GM10248 (cell line): ENCODE measurements at regions of chr20 and their contacts with region 1.

Region 1: GRCh38 chr20:2523919-2524708 is 12.3 kb upstream of the TMC2 start:
- DNase-seq: peak; percentile 89
- CTCF ChIP-seq: peak; percentile 96

Region 2: DNA sequence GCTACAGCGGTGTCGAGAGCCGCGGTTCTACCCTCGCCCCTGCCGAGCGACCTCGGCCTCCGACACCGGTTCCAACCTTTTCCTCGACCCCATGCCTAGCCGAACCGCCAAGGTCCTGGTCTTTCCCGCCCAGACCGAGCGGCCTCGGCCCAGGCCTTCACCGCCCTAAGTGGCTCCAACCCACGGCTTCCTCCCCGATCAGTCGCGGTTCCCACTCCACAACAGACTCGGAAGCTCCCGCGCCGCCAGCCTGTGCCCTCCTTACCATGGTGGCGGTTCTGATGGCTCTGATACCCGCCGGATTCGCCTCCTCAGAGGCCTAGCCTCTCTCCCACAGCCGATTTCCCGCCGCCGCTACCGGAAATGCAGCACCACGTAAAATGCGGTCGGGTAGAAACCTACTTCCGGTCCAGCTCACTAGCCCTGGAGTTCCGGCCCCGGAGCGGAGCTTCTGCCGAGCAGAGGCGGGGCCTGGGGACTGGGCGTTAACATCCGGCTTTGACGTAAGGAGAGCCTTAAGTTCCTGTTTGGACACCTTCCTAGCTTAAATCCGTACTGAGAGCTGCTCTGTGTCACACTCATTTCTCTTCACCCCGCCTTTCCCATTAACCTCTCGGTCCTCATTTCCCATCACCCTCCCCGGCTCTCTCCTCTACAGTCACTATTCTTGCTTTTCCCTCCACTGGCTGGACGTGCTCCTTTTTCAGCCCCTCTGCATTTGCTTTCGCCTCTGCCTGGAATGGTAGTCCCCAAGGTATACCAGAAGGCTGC is 53.5 kb before region 1 on chr20 and contains the start of gene SNRPB:
- CTCF ChIA-PET with region 1: interaction called, 18 read pairs
- POLR2A ChIA-PET with region 1: interaction called, 7 read pairs
- DNase-seq: peak; percentile 98
- CTCF ChIP-seq: no peak

Region 3: DNA sequence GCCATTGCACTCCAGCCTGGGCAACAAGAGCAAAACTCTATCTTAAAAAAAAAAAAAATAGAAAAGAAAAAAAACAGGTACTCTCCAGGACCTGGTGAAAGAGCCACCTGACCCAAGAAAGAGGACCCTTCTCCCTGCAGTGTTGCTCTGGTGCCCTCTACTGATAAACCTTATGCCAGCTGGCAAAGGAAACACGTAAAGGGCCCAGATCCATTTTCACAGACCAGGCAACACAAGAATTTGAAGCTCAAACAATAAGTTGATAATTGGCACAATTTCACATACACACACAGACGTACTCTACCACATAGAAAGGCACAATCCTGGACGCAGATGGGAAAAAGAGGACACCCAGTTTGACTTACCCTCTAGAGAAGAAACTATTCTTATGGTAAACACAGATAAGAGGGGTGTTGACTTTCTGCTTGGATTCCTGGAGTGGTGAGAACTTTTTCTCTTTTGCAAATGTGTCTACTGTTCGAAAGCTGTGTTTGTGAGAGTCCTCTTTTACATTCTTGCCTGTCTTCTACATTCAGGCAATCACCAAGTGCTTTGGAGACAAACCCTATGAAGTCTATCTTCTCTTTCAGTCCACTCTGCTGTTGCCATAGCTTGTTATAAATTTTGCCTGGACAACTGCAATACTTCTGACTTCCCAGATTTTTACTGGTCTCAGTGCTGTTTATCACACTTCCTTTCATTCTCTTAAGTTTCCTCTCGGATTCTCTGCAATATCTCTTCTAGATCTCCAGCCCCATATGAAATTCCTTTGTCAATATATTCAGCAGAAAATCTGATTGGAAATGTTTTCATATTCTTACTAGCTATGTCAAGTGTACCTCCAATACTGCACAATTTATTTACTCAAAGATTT is 47.1 kb before region 1 on chr20:
- CTCF ChIA-PET with region 1: interaction called, 13 read pairs
- POLR2A ChIA-PET with region 1: no interaction called
- DNase-seq: no peak
- CTCF ChIP-seq: peak; percentile 9

Region 4: GRCh38 chr20:2508631-2509467 is 15.3 kb before region 1 on chr20 and contains the start of gene ZNF343:
- CTCF ChIA-PET with region 1: interaction called, 138 read pairs
- POLR2A ChIA-PET with region 1: no interaction called
- DNase-seq: peak; percentile 92
- CTCF ChIP-seq: no peak

Region 5: GRCh38 chr20:2538931-2539720 is 15.0 kb after region 1 on chr20:
- CTCF ChIA-PET with region 1: interaction called, 12 read pairs
- POLR2A ChIA-PET with region 1: no interaction called
- DNase-seq: no peak
- CTCF ChIP-seq: no peak

Region 6: DNA sequence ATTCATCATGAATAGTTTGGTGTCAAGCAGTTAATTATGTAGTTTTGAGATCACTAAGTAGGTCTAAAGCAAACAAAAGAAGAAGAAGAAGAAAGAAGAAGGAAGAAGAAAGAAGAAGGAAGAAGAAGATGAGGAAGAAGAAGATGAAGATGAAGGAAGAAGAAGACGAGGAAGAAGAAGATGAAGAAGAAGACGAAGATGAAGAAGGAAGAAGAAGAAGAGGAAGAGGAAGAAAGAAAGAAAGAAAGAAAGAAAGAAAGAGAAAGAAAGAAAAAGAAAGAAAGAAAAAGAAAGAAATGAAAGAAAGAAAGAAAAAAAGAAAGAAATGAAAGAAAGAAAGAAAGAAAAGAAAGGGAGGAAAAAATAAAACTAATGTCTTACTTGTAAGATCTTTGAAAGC is 21.5 kb after region 1 on chr20:
- CTCF ChIA-PET with region 1: interaction called, 24 read pairs
- POLR2A ChIA-PET with region 1: no interaction called
- DNase-seq: no peak
- CTCF ChIP-seq: no peak

Region 7: DNA sequence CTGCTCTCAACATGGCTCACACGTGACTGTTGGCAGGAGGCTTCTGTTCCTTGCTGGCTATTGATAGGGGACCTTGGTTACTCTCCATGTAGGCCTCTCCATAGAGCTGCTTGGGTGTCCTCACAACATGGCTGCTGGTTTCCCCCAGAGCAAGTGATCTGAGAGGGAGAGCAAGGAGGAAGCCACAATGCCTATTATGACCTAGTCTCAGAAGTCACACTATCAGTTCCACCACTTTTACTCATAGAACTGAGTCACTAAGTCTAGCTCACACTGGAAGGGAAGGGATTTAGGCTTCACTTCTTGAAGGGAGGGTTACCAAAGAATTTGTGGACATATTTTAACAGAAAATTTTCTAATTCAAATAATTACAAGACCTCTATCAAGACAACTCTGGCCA is 119.6 kb after region 1 on chr20:
- CTCF ChIA-PET with region 1: interaction called, 43 read pairs
- POLR2A ChIA-PET with region 1: no interaction called
- DNase-seq: no peak
- CTCF ChIP-seq: no peak